ENCODE measurements at regions of chr10 and their contacts with region 1.

Region 1: GRCh38 chr10:93437088-93437945 is 44.8 kb downstream of the MYOF start:
- DNase-seq: peak; percentile 98
- H3K4me3 ChIP-seq: peak overlapping the region; percentile 45
- H3K27ac ChIP-seq: peak overlapping the region; percentile 100
- H3K27me3 ChIP-seq: no peaks in the 10 kb centered on the region
- CTCF ChIP-seq: no peak

Region 2: GRCh38 chr10:93386631-93387369 is 50.5 kb before region 1 on chr10:
- CTCF ChIA-PET with region 1: no interaction called
- POLR2A ChIA-PET with region 1: interaction called, 10 read pairs
- DNase-seq: no peak
- H3K4me3 ChIP-seq: no peak overlapping the region
- H3K27ac ChIP-seq: peak overlapping the region; percentile 47
- H3K27me3 ChIP-seq: no peaks in the 10 kb centered on the region
- CTCF ChIP-seq: no peak

Region 3: DNA sequence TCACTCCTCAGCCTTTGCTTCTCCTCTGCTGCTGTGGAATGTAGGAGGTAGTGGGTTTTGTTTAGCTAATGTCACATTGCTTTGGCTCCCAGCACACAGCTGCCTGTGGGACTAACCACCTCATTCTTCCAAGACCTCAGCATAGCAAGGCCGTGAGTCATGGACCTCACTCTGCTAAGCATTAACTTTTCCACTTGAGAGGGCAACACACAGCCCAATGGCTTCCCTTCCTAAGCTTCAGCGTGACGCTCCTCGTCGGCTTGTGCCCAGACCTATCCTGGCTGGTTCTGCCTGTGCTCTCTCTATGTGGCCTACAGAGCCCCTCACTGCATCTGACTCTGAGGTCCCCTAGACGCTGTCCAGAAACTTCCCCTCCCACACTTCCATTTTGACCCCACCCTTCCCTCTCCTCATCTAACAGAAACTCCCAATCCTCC is 21.5 kb after region 1 on chr10:
- CTCF ChIA-PET with region 1: no interaction called
- POLR2A ChIA-PET with region 1: interaction called, 30 read pairs
- DNase-seq: peak; percentile 100
- H3K4me3 ChIP-seq: peak overlapping the region; percentile 41
- H3K27ac ChIP-seq: peak overlapping the region; percentile 99
- H3K27me3 ChIP-seq: no peaks in the 10 kb centered on the region
- CTCF ChIP-seq: no peak

Region 4: DNA sequence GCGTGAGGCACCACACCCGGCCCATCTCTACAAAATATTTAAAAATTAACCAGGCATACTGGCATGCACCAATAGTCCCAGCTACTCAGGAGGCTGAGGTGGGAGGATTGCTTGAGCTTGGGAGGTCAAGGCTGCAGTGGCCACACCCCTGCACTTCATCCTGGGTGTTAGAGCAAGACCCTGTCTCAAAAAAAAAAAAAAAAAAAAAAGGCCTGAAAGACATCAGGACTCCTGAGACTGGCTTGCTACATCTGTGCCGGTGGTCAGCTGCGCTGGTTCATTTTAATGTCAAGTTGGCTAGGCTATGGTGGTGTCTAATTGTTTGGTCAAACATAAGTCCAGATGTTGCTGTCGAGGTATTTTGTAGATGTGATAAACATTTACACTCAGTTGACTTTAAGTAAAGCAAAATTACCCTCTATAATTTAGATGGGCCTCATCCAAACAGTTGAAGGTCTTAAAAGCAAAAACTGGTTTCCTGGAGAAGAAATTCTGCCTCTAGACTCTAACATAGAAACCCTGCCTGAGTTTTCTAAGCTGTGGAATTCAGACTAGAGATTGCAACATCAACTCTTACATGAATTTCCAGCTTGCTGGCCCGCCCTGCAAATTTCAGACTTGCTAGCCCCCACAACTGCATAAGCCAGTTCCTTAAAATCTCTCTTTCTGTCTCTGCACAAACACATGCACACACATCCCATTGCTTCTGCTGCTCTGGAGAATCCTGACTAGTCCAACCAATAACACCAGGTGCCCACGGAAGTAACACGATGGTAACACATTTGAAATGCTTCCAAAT is 26.6 kb after region 1 on chr10:
- CTCF ChIA-PET with region 1: interaction called, 3 read pairs
- POLR2A ChIA-PET with region 1: interaction called, 30 read pairs
- DNase-seq: no peak
- H3K4me3 ChIP-seq: no peak overlapping the region
- H3K27ac ChIP-seq: peak overlapping the region; percentile 97
- H3K27me3 ChIP-seq: no peaks in the 10 kb centered on the region
- CTCF ChIP-seq: no peak

Measured in AG04450 (cell line).